B cell (primary cell): ENCODE measurements at regions of chr22 and their contacts with region 1.

Region 1: DNA sequence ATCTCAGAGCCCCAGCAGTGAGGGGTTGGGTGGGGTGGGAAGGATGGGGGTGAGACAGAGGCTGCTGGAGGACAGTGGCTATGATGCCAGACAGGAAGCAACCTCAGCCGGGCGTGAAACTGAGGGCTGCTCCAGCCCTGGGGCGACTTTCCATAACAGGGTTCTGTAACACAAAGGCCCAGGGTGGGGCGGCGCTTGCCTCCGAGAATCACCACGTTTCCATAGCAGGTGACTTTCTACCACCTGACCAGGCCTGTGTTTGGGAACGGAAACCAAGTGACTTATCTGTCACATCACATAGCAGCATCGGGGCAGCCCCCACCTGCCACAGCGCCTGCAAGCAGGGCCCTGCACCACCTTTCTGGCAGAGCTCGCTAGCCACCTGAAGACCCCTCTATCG is 85.8 kb downstream of the TRMU start:
- DNase-seq: peak; percentile 80
- ATAC-seq: peak; percentile 84
- H3K4me3 ChIP-seq: no peak overlapping the region
- H3K4me3 Mint-ChIP-seq: peak overlapping the region; percentile 61
- H3K27ac ChIP-seq: peak overlapping the region; percentile 55 to 74
- H3K27ac Mint-ChIP-seq: no peak overlapping the region
- H3K4me1 ChIP-seq: peaks cover 6 to 32% of the 10 kb centered on the region in 2 donors
- H3K4me1 Mint-ChIP-seq: peaks cover 27% of the 10 kb centered on the region
- H3K27me3 ChIP-seq: no peaks in the 10 kb centered on the region
- H3K27me3 Mint-ChIP-seq: no peaks in the 10 kb centered on the region
- CTCF ChIP-seq: no peak

Region 2: GRCh38 chr22:46280999-46281623 is 140.2 kb before region 1 on chr22:
- CTCF ChIA-PET with region 1: no interaction called
- POLR2A ChIA-PET with region 1: no interaction called
- intact Hi-C with region 1: no loop called
- DNase-seq: peak; percentile 50
- ATAC-seq: peak; percentile 77
- H3K4me3 ChIP-seq: no peak overlapping the region
- H3K4me3 Mint-ChIP-seq: no peak overlapping the region
- H3K27ac ChIP-seq: peak overlapping the region in 1 of 2 donors; percentile 55
- H3K27ac Mint-ChIP-seq: peak overlapping the region; percentile 56
- H3K4me1 ChIP-seq: peaks cover 0 to 31% of the 10 kb centered on the region in 2 donors
- H3K4me1 Mint-ChIP-seq: peaks cover 17% of the 10 kb centered on the region
- H3K27me3 ChIP-seq: no peaks in the 10 kb centered on the region
- H3K27me3 Mint-ChIP-seq: no peaks in the 10 kb centered on the region
- CTCF ChIP-seq: no peak

Region 3: DNA sequence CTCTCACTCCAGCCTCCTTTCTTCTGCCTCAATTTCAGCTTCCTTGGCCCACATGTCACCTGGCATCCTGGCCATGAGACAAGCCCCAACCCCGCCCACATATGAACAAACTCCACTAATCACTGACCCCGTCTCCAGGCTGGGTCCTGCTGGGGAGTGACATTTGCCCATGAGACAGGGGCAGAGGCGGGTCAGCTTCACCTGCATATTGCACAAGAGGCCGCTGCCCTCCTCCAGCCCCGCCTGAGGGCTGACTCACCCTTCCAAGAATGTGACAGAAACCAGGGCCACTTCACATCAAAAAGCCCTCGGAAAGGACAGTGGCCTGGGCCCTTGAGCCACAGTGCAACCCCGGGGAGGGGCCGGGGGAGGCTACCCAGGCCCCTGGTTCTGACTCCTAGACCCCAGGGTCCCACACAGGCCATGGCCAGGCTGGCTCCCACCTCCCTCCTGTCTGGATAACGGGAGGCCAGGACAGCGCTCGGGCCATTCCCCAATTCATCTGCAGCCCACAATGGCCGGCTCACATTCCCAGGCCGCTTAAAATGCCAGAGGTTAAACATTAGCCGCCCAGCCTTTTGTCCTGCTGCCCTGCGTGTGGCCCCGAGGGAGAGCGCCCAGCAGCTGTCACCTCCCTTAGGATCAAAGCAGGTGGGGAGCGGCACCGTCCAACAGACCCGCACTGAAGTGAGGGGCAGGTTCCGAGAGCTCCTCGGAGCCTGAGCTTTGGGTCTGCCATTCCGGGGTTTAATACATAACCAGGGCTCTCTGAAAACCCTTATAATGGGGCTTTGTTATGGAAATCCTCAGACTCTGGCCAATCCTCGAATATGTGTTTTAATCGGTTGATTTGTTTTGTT is 43.5 kb before region 1 on chr22:
- CTCF ChIA-PET with region 1: no interaction called
- POLR2A ChIA-PET with region 1: interaction called, 11 read pairs
- intact Hi-C with region 1: no loop called
- DNase-seq: no peak
- ATAC-seq: no peak
- H3K4me3 ChIP-seq: no peak overlapping the region
- H3K4me3 Mint-ChIP-seq: no peak overlapping the region
- H3K27ac ChIP-seq: no peak overlapping the region
- H3K27ac Mint-ChIP-seq: no peak overlapping the region
- H3K4me1 ChIP-seq: peaks cover 9 to 20% of the 10 kb centered on the region in 2 donors
- H3K4me1 Mint-ChIP-seq: peaks cover 5% of the 10 kb centered on the region
- H3K27me3 ChIP-seq: peaks cover 0 to 6% (median 0%) of the 10 kb centered on the region in 4 experiments
- H3K27me3 Mint-ChIP-seq: no peaks in the 10 kb centered on the region
- CTCF ChIP-seq: no peak

Region 4: DNA sequence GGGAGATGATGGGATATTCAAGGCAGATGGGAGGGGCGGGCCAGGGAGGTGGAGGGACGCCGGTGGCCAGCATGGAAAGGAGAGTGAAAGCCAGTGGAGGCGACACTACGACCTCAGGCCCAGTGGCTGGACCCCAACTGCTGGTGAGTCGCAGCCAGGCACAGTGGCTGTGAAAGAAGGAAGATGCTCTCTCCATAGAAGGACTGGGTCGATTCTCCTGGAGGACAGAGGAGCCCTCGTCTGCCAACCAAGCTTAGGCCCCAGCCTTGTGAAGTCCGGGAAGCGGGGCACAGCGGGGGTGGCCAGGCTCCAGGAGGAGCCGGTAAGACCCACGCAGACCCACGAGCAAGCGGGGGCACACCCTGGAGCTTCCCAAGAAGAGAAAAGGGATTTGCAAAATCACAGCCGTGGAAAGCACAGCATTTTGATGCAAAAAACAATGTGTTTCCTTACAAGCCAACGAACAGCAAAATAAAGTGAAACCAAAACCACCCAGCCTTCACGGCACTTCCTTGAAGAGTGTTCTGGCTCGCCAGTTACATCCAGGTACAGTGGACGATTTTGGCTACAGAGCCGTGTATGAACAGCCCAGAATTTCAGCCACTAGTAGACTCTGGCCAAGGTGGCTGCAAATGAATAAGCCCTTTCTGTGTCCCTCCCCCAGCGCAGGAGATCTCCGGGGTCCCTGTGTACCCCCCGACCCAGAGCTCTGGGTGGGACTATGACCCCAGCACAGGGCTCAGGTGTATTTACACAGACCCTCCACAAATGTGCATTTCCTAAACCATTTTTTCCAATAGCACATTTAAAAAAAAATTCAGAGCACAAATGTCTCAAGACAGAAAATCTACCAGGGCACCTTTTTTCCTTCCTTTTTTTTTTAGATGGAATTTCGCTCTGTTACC is 11.1 kb after region 1 on chr22:
- CTCF ChIA-PET with region 1: no interaction called
- POLR2A ChIA-PET with region 1: no interaction called
- intact Hi-C with region 1: loop called (anchors 1 kb)
- DNase-seq: peak; percentile 77
- ATAC-seq: peak; percentile 52
- H3K4me3 ChIP-seq: peak overlapping the region; percentile 60 to 99 (median 67)
- H3K4me3 Mint-ChIP-seq: peak overlapping the region; percentile 96
- H3K27ac ChIP-seq: peak overlapping the region; percentile 85 to 87
- H3K27ac Mint-ChIP-seq: peak overlapping the region; percentile 99
- H3K4me1 ChIP-seq: peaks cover 20 to 40% of the 10 kb centered on the region in 2 donors
- H3K4me1 Mint-ChIP-seq: peaks cover 38% of the 10 kb centered on the region
- H3K27me3 ChIP-seq: no peaks in the 10 kb centered on the region
- H3K27me3 Mint-ChIP-seq: no peaks in the 10 kb centered on the region
- CTCF ChIP-seq: no peak

Region 5: DNA sequence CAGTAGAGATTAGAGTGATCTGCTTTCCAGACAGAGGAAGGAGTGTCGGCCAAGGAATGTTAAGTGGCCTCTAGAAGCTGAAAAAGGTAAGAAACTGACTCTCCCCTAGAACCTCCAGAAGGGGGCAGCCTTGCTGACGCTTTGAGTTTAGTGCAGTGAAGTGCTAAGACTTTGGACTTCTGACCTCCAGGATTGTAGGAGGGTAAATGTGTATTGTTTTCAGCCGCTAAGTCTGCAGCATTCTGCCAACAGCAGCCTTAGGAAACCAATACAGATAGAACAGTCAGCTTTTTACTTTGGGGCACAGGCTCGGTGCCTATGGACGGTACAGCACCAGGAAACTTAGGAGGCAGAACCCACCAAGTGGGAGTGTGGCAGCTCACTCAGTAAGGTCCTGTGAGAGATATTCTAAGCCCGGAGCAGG is 337.6 kb after region 1 on chr22:
- CTCF ChIA-PET with region 1: no interaction called
- POLR2A ChIA-PET with region 1: no interaction called
- intact Hi-C with region 1: no loop called
- DNase-seq: peak; percentile 74
- ATAC-seq: no peak
- H3K4me3 ChIP-seq: no peak overlapping the region
- H3K4me3 Mint-ChIP-seq: no peak overlapping the region
- H3K27ac ChIP-seq: no peak overlapping the region
- H3K27ac Mint-ChIP-seq: no peak overlapping the region
- H3K4me1 ChIP-seq: peaks cover 16 to 34% of the 10 kb centered on the region in 2 donors
- H3K4me1 Mint-ChIP-seq: peaks cover 37% of the 10 kb centered on the region
- H3K27me3 ChIP-seq: no peaks in the 10 kb centered on the region
- H3K27me3 Mint-ChIP-seq: no peaks in the 10 kb centered on the region
- CTCF ChIP-seq: peak; percentile 87